Activated CD4-positive, alpha-beta memory T cell treated with anti-CD3 and anti-CD28 coated beads, Interleukin-2, amount 10 ng/mL, durations not matched to agents 7 days and 5 days (primary cell): ENCODE measurements at regions of chr12 and their contacts with region 1.

Region 1: GRCh38 chr12:56448860-56449621 is at the start of gene TIMELESS:
- DNase-seq: peak; percentile 87
- H3K4me3 Mint-ChIP-seq: peak within 1 kb of the TSS; percentile 89
- H3K27ac Mint-ChIP-seq: peak within 1 kb of the TSS; percentile 81
- H3K4me1 Mint-ChIP-seq: peaks cover 36% of the 10 kb centered on the region
- H3K27me3 Mint-ChIP-seq: peaks cover 4% of the 10 kb centered on the region
- total RNA-seq, gene TIMELESS: 44.1 to 45.6 TPM

Region 2: GRCh38 chr12:56315622-56316473 is 133.2 kb before region 1 on chr12 and contains the start of gene CNPY2:
- CTCF ChIA-PET with region 1: interaction called, 5 read pairs
- POLR2A ChIA-PET with region 1: interaction called, 22 read pairs
- DNase-seq: peak; percentile 94
- H3K4me3 Mint-ChIP-seq: peak within 1 kb of the TSS; percentile 96
- H3K27ac Mint-ChIP-seq: peak within 1 kb of the TSS; percentile 94
- H3K4me1 Mint-ChIP-seq: peaks cover 21% of the 10 kb centered on the region
- H3K27me3 Mint-ChIP-seq: no peaks in the 10 kb centered on the region
- total RNA-seq, gene CNPY2: 95.0 to 99.3 TPM

Region 3: DNA sequence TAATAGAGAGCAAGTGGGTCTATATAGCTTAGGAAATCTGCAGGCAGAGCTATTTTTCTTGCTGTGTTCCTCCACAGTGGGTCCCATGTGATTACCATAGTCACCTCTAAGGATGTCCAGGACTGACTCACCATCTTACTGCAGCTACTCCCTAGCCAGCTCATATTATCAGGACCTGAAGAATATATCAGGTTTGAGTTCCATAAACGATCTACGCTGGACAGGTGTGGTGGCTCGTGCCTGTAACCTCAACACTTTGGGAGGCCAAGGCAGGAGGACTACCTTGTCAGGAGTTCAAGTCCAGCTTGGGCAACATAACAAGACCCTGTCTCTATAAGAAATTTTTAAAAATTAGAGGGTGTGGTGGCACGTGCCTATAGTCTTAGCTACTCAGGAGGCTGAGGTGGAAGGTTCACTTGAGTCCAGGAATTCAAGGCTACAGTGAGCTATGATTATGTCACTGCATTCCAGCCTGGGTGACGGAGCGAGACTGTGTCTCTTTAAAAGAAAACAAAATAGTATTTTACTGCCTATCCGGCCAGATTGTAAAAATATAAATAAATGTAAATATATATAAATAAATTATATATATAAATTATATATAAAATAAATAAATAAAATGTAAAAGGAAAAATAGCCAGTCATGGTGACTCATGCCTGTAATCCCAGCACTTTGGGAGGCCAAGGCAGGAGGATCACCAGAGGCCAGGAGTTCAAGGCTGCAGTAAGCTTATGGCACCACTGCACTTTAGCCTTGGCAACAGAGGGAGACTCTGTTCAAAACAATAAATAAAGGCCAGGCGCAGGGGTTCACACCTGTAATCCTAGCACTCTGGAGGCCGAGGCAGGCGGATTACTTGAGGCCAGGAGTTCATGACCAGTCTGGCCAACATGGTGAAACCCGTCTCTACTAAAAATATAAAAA is 12.5 kb after region 1 on chr12:
- CTCF ChIA-PET with region 1: interaction called, 50 read pairs
- POLR2A ChIA-PET with region 1: interaction called, 66 read pairs
- DNase-seq: no peak
- H3K4me3 Mint-ChIP-seq: no peak overlapping the region
- H3K27ac Mint-ChIP-seq: no peak overlapping the region
- H3K4me1 Mint-ChIP-seq: peaks cover 7% of the 10 kb centered on the region
- H3K27me3 Mint-ChIP-seq: no peaks in the 10 kb centered on the region